Common myeloid progenitor, CD34-positive (primary cell): ENCODE measurements at regions of chr18 and their contacts with region 1.

Region 1: GRCh38 chr18:49486953-49487710 is at the start of gene C18orf32:
- DNase-seq: peak; percentile 95 to 97 (median 97)
- H3K4me3 ChIP-seq: peak within 1 kb of the TSS; percentile 59 to 99 (median 93)
- H3K27ac ChIP-seq: peak within 1 kb of the TSS; percentile 90 to 93
- H3K4me1 ChIP-seq: peaks cover 17 to 44% (median 36%) of the 10 kb centered on the region in 4 experiments
- H3K27me3 ChIP-seq: no peaks in the 10 kb centered on the region

Region 2: GRCh38 chr18:49459404-49460171 is 27.5 kb before region 1 on chr18:
- CTCF ChIA-PET with region 1: interaction called, 48 read pairs
- POLR2A ChIA-PET with region 1: interaction called, 14 read pairs
- DNase-seq: peak in 2 of 3 donors; percentile 22 to 38
- H3K4me3 ChIP-seq: peak overlapping the region; percentile 61 to 96 (median 89)
- H3K27ac ChIP-seq: peak overlapping the region; percentile 40 to 75
- H3K4me1 ChIP-seq: peaks cover 9 to 16% (median 10%) of the 10 kb centered on the region in 4 experiments
- H3K27me3 ChIP-seq: no peaks in the 10 kb centered on the region

Region 3: GRCh38 chr18:49476664-49477411 is 10.3 kb before region 1 on chr18:
- CTCF ChIA-PET with region 1: interaction called, 34 read pairs
- POLR2A ChIA-PET with region 1: interaction called, 17 read pairs
- DNase-seq: peak; percentile 73 to 89 (median 84)
- H3K4me3 ChIP-seq: peak overlapping the region in 6 of 7 experiments; percentile 17 to 58 (median 36)
- H3K27ac ChIP-seq: peak overlapping the region in 1 of 2 experiments; percentile 54
- H3K4me1 ChIP-seq: peaks cover 5 to 23% (median 16%) of the 10 kb centered on the region in 4 experiments
- H3K27me3 ChIP-seq: no peaks in the 10 kb centered on the region

Region 4: GRCh38 chr18:49697757-49698524 is 210.8 kb after region 1 on chr18:
- CTCF ChIA-PET with region 1: no interaction called
- POLR2A ChIA-PET with region 1: no interaction called
- DNase-seq: no peak
- H3K4me3 ChIP-seq: no peak overlapping the region
- H3K27ac ChIP-seq: no peak overlapping the region
- H3K4me1 ChIP-seq: no peaks in the 10 kb centered on the region
- H3K27me3 ChIP-seq: peaks cover 0 to 1% (median 0%) of the 10 kb centered on the region in 5 experiments